ENCODE measurements at regions of chr15 and their contacts with region 1.

Region 1: DNA sequence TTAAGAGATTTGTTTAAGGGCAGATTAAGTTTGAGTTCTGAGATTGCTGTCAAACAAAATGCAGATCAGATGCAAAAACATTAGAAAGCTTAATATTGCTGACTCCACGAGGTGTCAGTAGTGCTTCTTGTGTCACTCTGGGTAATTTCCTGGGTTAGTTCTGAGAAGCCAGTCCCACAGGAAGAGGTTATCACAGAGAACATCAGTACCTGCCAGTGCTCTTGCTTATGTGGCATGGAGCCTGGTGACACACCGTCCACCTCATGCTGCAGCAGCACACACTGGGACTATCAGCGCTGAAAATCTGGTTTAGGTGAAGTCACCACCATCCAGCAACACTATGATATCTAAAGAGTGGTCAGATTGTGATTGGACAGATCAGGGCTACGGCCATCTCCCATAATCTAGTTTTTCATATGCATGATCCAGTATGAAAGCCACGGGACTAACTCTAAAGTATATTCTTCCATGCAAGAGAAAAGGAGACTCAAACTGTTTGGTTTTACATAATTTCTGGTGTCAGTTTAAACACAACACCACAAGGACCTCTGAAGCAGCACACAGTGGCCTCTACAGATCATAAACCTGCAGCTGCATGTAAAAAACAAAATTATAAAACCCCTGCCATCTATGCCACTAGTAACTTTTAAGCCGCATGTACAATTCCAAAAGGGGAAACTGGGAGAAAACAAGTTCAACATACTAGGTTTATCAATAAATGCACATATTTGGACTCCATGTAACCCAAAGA is 36.1 kb upstream of the MYO5C start:
- DNase-seq: peak; percentile 81
- ATAC-seq: peak; percentile 92
- H3K4me3 ChIP-seq: no peak overlapping the region
- H3K27ac ChIP-seq: no peak overlapping the region
- H3K4me1 ChIP-seq: peaks cover 21% of the 10 kb centered on the region
- H3K27me3 ChIP-seq: no peaks in the 10 kb centered on the region
- CTCF ChIP-seq: peak; percentile 74

Region 2: DNA sequence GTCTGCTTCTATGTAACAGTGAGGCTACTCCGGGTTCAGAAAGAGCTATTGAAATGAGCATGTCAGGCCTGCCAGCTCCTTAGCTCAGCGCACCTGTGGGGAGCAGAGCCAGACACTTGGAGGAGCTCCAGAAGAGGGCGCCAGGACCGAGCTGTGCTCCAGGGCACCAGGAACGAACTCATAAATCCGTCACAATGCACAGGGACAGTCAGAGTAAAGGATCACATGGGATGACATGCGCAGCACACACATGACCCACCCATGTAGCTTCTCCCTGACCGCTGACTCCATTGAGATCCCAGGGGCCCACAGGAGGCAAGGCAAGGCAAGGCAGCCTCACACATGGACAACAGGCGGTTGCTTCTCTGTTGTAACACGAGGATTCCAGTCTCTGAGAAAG is 114.5 kb before region 1 on chr15:
- CTCF ChIA-PET with region 1: no interaction called
- POLR2A ChIA-PET with region 1: no interaction called
- in situ Hi-C with region 1: no loop called
- intact Hi-C with region 1: no loop called
- DNase-seq: no peak
- ATAC-seq: peak; percentile 68
- H3K4me3 ChIP-seq: no peak overlapping the region
- H3K27ac ChIP-seq: no peak overlapping the region
- H3K4me1 ChIP-seq: no peaks in the 10 kb centered on the region
- H3K27me3 ChIP-seq: no peaks in the 10 kb centered on the region
- CTCF ChIP-seq: peak; percentile 58

Region 3: DNA sequence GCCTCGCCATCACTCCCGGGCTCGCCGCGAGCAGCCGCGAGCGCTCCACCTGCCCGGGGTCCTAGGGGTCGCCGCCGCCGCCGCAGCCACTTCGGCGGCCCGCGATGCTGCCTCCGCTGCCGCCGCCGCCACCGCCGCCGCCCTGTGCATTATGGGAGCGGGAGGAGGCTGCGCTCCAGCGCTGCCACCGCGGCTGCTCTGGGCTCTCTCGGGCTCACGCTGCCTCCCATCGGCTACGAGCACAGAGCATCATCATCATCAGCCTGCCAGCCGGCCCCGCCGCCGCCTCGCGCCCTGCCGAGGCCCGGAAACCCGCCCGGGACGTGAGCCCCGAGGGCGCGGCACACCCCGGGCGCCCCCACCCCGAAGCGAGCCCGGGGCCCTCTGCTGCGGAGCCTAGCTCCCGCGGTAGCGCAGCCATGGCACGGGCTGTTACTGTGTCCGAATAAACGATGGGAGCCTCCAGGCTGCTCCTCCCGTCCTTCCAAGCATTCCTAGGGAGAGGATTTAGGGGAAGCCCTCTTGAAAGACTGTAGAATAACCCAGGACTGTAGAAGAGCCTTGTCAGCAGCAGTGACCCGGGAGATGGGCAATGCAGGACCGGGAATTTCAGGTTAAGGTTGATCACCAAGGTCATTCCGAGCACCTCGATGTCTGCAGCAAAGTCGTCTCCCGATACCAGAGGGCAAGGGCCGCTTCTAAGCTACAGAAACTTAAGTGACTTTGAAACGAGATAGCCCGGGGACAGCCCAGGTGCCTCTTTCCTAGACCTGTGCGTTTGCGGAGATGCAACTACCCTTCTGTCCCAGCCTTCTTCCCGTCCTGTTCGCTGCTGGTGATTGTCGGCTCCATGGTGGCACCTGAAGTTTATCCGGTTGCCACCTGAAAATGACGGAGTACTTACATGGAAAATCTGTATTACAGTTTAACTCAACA is 197.6 kb after region 1 on chr15:
- CTCF ChIA-PET with region 1: no interaction called
- POLR2A ChIA-PET with region 1: no interaction called
- in situ Hi-C with region 1: no loop called
- intact Hi-C with region 1: loop called (anchors 10 kb)
- DNase-seq: no peak
- ATAC-seq: peak; percentile 94
- H3K4me3 ChIP-seq: peak overlapping the region; percentile 74 to 79
- H3K27ac ChIP-seq: peak overlapping the region; percentile 82
- H3K4me1 ChIP-seq: peaks cover 9% of the 10 kb centered on the region
- H3K27me3 ChIP-seq: no peaks in the 10 kb centered on the region
- CTCF ChIP-seq: peak; percentile 41

Region 4: DNA sequence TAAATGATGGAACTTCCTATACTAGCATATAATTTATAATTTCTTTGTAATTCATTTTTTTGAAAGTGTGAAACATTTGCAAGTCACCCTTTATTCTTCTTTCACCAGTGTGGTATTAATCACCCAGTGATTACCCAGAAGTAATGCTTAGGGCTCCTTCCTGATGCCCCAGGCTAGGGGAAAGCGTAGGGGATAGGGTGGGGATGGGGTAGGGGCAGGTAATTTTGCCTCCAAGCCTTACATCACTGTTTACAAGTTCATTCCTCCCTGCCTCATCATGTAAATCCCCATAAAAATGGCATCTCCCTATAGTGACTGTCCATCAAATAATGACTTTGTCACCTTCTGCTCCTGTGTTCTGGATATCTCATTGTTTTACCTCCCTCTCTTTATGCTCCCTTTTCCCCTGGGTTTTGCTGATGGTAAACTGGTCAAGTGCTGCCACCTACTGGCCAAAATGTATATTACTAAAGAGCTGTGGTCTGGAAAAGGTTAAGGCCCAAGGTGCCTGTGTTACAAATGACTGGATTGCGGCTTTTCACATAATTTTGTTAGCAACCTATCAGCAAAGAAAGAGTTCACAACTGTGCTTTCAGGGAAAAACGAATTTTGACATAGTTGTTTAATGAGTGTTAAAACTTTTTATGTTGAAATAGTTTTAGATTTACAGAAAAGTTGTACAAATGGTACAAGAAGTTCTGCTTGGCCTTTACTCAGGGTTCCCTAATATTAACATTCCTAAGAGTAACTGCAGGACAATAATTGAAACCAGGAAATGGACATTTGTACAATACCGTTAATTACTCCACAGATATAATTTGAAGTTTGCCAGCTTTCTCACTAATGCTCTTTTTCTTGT is 403.8 kb after region 1 on chr15:
- CTCF ChIA-PET with region 1: interaction called, 4 read pairs
- POLR2A ChIA-PET with region 1: no interaction called
- in situ Hi-C with region 1: no loop called
- intact Hi-C with region 1: loop called (anchors 5 kb)
- DNase-seq: peak; percentile 77
- ATAC-seq: peak; percentile 95
- H3K4me3 ChIP-seq: no peak overlapping the region
- H3K27ac ChIP-seq: no peak overlapping the region
- H3K4me1 ChIP-seq: no peaks in the 10 kb centered on the region
- H3K27me3 ChIP-seq: no peaks in the 10 kb centered on the region
- CTCF ChIP-seq: peak; percentile 76

Measured in Panc1 (cell line).